ENCODE measurements at regions of chr5 and their contacts with region 1.

Region 1: DNA sequence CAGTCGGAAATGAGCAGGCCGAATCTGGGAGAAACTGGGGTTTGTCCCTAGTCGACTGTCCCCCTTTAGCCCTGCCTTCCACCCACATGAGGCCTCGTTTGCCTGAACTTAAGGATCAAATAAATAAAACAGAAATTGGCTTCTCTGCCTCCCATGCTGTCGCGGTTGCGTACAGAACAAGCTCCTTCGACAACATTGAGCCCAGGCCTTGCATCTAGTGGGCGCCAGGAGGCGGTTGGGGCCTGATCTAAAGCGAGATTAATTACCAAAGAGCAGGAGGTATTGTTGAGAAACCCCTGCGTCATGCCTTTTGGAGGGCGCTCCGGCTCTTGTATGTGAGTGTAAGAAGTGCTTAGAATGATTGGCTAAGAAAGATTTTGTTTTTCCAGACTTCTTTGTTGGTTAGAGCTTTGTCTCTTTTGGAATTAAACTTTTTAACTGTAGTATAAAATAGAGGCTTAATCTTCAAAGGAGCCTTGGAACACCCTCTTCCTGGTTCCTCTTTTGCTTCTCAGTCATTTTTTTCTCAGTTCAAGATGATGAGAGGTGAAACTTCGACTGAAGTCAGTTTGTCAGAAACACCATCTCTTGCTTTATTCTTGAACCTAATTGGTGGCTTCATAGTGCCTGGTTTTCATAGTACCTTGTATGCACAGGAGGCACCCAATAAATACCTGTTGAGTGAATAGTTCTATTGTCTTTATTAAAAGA is 827 bp downstream of the ATP6V0E1 start:
- DNase-seq: peak; percentile 45
- ATAC-seq: peak; percentile 67
- H3K4me3 ChIP-seq: peak overlapping the region; percentile 93 to 94
- H3K27ac ChIP-seq: peak overlapping the region; percentile 73
- H3K4me1 ChIP-seq: peaks cover 5 to 14% of the 10 kb centered on the region in 2 experiments; a peak in 2 of 4 replicates
- H3K27me3 ChIP-seq: no peaks in the 10 kb centered on the region
- CTCF ChIP-seq: peak; percentile 45 to 54 (median 51); a peak in 5 of 6 replicates
- POLR2A ChIP-seq: no peak
- RAD21 ChIP-seq: peak; percentile 70

Region 2: DNA sequence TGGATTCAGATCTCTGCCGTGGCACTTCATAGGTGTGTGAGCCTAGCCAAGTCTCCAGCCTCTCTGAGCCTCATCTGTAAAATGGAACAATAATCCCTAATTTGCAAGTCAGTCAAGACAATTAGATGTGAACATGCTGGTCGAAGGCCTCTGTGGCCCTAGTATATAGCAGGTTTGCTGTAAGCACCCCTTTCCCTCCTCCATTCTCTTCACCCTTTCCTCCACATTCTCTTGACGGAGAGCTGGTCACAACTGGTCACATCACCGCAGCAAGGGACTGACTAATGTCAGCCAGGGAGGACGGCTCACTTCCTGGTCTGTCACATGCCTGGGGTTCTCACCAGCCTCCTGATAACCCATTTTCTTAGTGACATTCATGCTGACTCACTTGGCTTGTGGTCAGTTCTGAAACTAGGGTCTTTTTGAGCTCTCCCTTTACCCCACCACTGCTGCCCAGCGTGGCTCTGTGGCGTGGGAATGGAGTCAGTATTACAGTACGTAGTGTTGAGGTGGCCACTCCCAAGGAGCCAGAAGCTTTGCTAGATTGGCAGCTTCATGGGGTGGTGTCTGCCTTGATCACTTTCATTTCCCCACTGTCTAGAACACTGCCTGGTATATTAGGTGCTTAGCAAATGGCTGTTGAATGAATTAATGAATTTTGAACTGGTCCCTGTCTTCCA is 102.6 kb before region 1 on chr5:
- CTCF ChIA-PET with region 1: no interaction called
- POLR2A ChIA-PET with region 1: no interaction called
- RAD21 ChIA-PET with region 1: no interaction called
- intact Hi-C with region 1: no loop called
- DNase-seq: peak; percentile 10
- ATAC-seq: no peak; the same call in 1 of the 2 replicates
- H3K4me3 ChIP-seq: no peak overlapping the region
- H3K27ac ChIP-seq: no peak overlapping the region
- H3K4me1 ChIP-seq: peaks cover 0 to 10% of the 10 kb centered on the region in 2 experiments; a peak in 2 of 4 replicates
- H3K27me3 ChIP-seq: no peaks in the 10 kb centered on the region
- CTCF ChIP-seq: no peak
- POLR2A ChIP-seq: no peak
- RAD21 ChIP-seq: no peak

Region 3: GRCh38 chr5:173057062-173057924 is 72.9 kb after region 1 on chr5:
- CTCF ChIA-PET with region 1: interaction called, 4 read pairs
- POLR2A ChIA-PET with region 1: interaction called, 6 read pairs
- RAD21 ChIA-PET with region 1: no interaction called
- intact Hi-C with region 1: loop called (anchors 1 kb)
- DNase-seq: peak; percentile 95
- ATAC-seq: peak; percentile 89
- H3K4me3 ChIP-seq: peak overlapping the region; percentile 64 to 72
- H3K27ac ChIP-seq: peak overlapping the region; percentile 65
- H3K4me1 ChIP-seq: peaks cover 11 to 18% of the 10 kb centered on the region in 2 experiments
- H3K27me3 ChIP-seq: no peaks in the 10 kb centered on the region
- CTCF ChIP-seq: peak in 2 of 3 experiments; percentile 5 to 17; a peak in 1 of 6 replicates
- POLR2A ChIP-seq: no peak
- RAD21 ChIP-seq: no peak

Region 4: GRCh38 chr5:173144200-173145176 is 160.1 kb after region 1 on chr5 and contains the start of gene BNIP1:
- CTCF ChIA-PET with region 1: interaction called, 5 read pairs
- POLR2A ChIA-PET with region 1: no interaction called
- RAD21 ChIA-PET with region 1: interaction called in 1 of 2 experiments, 6 read pairs
- intact Hi-C with region 1: loop called (anchors 1 kb)
- DNase-seq: peak; percentile 92
- ATAC-seq: peak; percentile 96
- H3K4me3 ChIP-seq: peak within 1 kb of the TSS; percentile 94 to 98
- H3K27ac ChIP-seq: peak within 1 kb of the TSS; percentile 80
- H3K4me1 ChIP-seq: peaks cover 0 to 9% of the 10 kb centered on the region in 2 experiments; a peak in 2 of 4 replicates
- H3K27me3 ChIP-seq: no peaks in the 10 kb centered on the region
- CTCF ChIP-seq: peak; percentile 75 to 97 (median 87)
- POLR2A ChIP-seq: peak; percentile 63
- RAD21 ChIP-seq: peak; percentile 55
- total RNA-seq, gene BNIP1: 18.6 TPM

Region 5: DNA sequence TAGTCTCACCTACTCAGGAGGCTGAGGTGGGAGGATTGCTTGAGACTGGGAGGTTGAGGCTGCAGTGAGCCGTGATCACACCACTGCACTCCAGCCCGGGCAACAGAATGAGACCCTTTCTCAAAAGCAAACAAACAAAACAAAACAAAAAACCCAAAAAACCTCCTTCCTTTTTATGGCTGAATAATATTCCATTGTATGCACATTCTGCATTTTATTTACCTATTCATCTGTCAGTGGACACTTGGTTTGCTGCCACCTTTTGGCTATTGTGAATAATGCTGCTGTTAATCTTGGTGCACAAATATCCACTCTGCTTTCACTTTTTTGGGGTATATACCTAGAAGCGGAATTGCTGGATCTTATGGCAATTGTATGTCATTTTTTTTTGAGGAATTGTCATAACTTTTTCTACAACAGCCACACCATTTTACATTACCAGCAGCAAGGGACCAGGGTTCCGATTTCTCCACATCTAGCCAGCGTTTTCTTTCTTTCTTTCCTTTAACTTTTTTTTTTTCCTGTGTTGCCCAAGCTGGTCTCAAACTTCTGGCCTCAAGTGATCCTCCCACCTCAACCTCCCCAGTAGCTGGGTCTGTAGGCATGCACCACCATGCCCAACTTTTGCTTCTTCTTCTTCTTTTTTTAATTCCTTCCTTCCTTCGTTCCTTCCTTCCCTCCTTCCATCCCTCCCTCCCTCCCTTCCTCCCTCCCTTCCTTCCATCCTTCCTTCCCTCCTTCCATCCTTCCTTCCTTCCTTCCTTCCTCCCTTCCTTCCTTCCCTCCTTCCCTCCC is 220.0 kb after region 1 on chr5:
- CTCF ChIA-PET with region 1: interaction called, 5 read pairs
- POLR2A ChIA-PET with region 1: no interaction called
- RAD21 ChIA-PET with region 1: no interaction called
- intact Hi-C with region 1: loop called (anchors 5 kb)
- DNase-seq: peak; percentile 21
- ATAC-seq: peak; percentile 54; the same call in 1 of the 2 replicates
- H3K4me3 ChIP-seq: peak overlapping the region in 1 of 2 experiments; percentile 3; a peak in 1 of 4 replicates
- H3K27ac ChIP-seq: no peak overlapping the region
- H3K4me1 ChIP-seq: peaks cover 9 to 22% of the 10 kb centered on the region in 2 experiments
- H3K27me3 ChIP-seq: peaks cover 15% of the 10 kb centered on the region; the same call in 1 of the 2 replicates
- CTCF ChIP-seq: peak; percentile 68 to 77 (median 70); a peak in 5 of 6 replicates
- POLR2A ChIP-seq: no peak
- RAD21 ChIP-seq: peak; percentile 75

Region 6: DNA sequence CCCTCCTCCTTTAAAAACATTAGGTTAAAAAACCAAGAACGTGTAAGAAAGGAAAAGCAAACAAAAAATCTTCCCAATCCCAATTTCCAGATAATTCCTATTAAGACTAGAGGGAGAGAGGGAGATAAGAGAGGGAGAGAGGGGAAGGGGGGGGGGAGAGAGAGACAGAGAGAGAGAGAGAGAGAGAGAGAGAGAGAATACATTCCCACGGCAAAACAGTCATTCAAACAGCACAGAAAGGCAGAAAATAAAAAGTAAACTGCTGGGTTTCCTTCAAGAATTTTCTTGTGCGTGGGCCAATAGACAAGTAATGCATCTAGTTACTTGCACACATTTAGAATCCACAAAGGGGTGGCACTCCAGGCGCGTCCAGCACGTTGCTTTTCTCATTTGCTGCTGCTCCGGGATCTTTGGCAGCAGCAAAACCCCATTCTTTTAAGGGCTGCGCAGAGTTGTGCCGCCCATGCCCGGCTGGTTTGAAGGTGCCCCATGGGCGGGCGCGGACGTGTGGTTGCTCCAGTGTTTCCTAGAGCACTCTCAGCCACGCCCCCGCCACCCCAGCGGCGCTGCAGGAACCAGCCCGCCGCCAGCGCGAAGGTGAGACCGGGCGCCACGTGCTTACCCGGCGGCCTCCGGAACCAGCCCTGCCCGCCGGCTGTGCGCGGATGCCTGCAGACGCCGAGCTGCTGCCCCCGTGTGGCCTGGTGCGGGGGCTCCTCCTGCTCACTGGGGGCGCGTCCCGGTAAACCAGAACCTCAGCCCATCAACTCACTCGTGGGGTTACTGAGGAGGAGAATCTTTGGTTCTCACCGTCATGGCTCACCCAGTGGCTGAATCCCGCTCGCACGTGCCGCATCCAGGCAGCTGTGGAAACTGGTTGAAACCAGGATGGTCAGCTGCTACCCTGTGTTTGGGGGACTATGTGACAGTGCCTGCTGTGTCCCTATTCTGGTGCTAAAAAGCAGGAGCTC is 299.2 kb after region 1 on chr5:
- CTCF ChIA-PET with region 1: interaction called, 6 read pairs
- POLR2A ChIA-PET with region 1: no interaction called
- RAD21 ChIA-PET with region 1: interaction called in 1 of 2 experiments, 4 read pairs
- intact Hi-C with region 1: loop called (anchors 2 kb)
- DNase-seq: peak; percentile 72
- ATAC-seq: peak; percentile 96
- H3K4me3 ChIP-seq: peak overlapping the region in 1 of 2 experiments; percentile 19; a peak in 2 of 4 replicates
- H3K27ac ChIP-seq: no peak overlapping the region
- H3K4me1 ChIP-seq: peaks cover 8 to 13% of the 10 kb centered on the region in 2 experiments
- H3K27me3 ChIP-seq: no peaks in the 10 kb centered on the region
- CTCF ChIP-seq: peak; percentile 82 to 91 (median 87)
- POLR2A ChIP-seq: no peak
- RAD21 ChIP-seq: peak; percentile 91